ENCODE measurements at regions of chr15 and their contacts with region 1.

Region 1: GRCh38 chr15:23877502-23878412 is 190.7 kb upstream of the NDN start:
- DNase-seq: peak; percentile 50
- ATAC-seq: peak; percentile 100
- H3K4me3 ChIP-seq: no peak overlapping the region; a peak in 1 of 6 replicates
- H3K27ac ChIP-seq: no peak overlapping the region
- H3K4me1 ChIP-seq: no peaks in the 10 kb centered on the region
- H3K27me3 ChIP-seq: no peaks in the 10 kb centered on the region; a peak in 1 of 5 replicates
- CTCF ChIP-seq: peak; percentile 95
- EP300 ChIP-seq: no peak
- POLR2A ChIP-seq: no peak
- RAD21 ChIP-seq: peak; percentile 82

Region 2: GRCh38 chr15:23497710-23498111 is 380.0 kb before region 1 on chr15:
- CTCF ChIA-PET with region 1: no interaction called
- POLR2A ChIA-PET with region 1: no interaction called
- in situ Hi-C with region 1: no loop called
- intact Hi-C with region 1: loop called (anchors 1 kb)
- DNase-seq: no peak
- ATAC-seq: no peak
- H3K4me3 ChIP-seq: no peak overlapping the region
- H3K27ac ChIP-seq: no peak overlapping the region
- H3K4me1 ChIP-seq: no peaks in the 10 kb centered on the region
- H3K27me3 ChIP-seq: no peaks in the 10 kb centered on the region; a peak in 1 of 5 replicates
- CTCF ChIP-seq: 0 out of 2 replicates have a peak, but pooled peaks have one; percentile 21
- EP300 ChIP-seq: no peak
- POLR2A ChIP-seq: no peak
- RAD21 ChIP-seq: no peak

Region 3: DNA sequence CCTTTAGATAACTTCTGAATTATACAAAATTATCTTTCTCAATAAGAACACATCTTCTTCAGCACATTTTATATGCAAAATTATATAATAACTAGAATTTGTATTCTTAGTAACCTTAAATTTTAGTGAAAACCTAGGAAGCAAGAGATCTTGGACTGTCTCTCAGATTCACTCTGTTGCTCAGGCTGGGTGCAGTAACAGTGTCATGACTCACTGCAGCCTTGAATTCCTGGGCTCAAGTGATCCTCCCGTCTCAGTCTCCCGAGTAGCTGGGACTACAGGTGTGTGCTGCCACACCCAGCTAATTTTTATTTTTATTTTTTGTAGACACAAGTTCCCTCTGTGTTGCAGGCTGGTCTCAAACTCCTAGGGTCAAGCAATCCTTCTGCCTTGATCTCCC is 282.4 kb before region 1 on chr15:
- CTCF ChIA-PET with region 1: no interaction called
- POLR2A ChIA-PET with region 1: no interaction called
- in situ Hi-C with region 1: no loop called
- intact Hi-C with region 1: no loop called
- DNase-seq: no peak
- ATAC-seq: no peak
- H3K4me3 ChIP-seq: no peak overlapping the region
- H3K27ac ChIP-seq: no peak overlapping the region
- H3K4me1 ChIP-seq: no peaks in the 10 kb centered on the region
- H3K27me3 ChIP-seq: no peaks in the 10 kb centered on the region
- CTCF ChIP-seq: no peak
- EP300 ChIP-seq: no peak
- POLR2A ChIP-seq: no peak
- RAD21 ChIP-seq: no peak

Region 4: DNA sequence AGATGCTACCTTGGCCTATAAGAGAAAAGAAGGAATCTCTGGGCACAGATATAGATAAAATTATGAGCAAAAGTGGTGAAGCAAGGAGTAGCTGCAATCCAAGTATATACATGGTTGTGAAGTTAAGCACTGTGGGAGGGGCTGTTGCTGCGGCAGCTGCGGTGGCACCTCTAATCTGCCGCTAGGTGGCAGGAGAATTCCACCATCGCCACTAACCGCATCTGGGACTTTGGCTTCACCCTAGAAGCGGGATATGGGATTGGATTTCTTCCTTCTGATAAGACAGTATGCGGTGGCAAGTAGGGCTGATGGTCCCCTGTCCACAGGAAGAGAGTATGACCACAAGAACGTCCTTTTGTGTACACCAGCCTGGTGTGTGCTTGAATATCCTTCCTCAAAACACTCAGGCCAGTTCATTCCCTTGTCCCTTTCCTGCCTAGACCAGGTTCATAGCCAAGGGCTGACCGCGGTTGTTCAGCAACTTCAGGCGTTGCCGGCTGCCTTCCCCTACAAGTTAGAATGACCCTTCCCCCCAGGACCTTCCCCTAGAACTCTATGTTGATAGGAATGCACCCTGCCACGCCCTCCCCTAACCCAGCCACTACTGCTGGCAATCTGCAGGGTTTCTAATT is 235.2 kb before region 1 on chr15:
- CTCF ChIA-PET with region 1: interaction called, 17 read pairs
- POLR2A ChIA-PET with region 1: no interaction called
- in situ Hi-C with region 1: no loop called
- intact Hi-C with region 1: loop called (anchors 1 kb)
- DNase-seq: peak; percentile 51
- ATAC-seq: peak; percentile 93
- H3K4me3 ChIP-seq: no peak overlapping the region
- H3K27ac ChIP-seq: no peak overlapping the region
- H3K4me1 ChIP-seq: no peaks in the 10 kb centered on the region
- H3K27me3 ChIP-seq: peaks cover 2% of the 10 kb centered on the region in 2 experiments; a peak in 2 of 5 replicates
- CTCF ChIP-seq: peak; percentile 92
- EP300 ChIP-seq: no peak
- POLR2A ChIP-seq: no peak
- RAD21 ChIP-seq: peak; percentile 85

Region 5: GRCh38 chr15:23648920-23649515 is 228.7 kb before region 1 on chr15:
- CTCF ChIA-PET with region 1: interaction called, 17 read pairs
- POLR2A ChIA-PET with region 1: no interaction called
- in situ Hi-C with region 1: no loop called
- intact Hi-C with region 1: no loop called
- DNase-seq: peak; percentile 16
- ATAC-seq: peak; percentile 82
- H3K4me3 ChIP-seq: no peak overlapping the region
- H3K27ac ChIP-seq: no peak overlapping the region
- H3K4me1 ChIP-seq: no peaks in the 10 kb centered on the region
- H3K27me3 ChIP-seq: peaks cover 2 to 18% of the 10 kb centered on the region in 2 experiments; a peak in 2 of 5 replicates
- CTCF ChIP-seq: peak; percentile 75
- EP300 ChIP-seq: no peak
- POLR2A ChIP-seq: no peak
- RAD21 ChIP-seq: 0 out of 2 replicates have a peak, but pooled peaks have one; percentile 41

Region 6: DNA sequence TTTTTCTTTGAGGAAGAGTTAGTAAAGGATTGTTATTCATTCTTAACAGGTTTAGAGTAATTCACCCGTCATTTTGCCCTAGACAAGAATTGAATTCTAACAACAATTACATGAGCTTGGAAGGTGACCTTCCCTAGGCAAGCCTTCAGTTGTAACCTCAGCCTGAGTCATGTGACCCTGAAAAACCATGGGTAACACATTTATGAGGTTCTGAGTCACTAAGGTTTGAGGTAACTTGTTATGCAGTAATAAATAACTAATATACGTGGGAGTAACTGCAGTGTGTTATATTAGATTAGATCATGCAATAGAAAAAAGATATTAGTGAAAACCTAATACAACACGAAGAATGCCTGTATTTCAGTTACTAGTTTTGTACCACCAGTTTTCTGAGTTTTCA is 46.9 kb after region 1 on chr15:
- CTCF ChIA-PET with region 1: no interaction called
- POLR2A ChIA-PET with region 1: no interaction called
- in situ Hi-C with region 1: no loop called
- intact Hi-C with region 1: no loop called
- DNase-seq: no peak
- ATAC-seq: no peak
- H3K4me3 ChIP-seq: no peak overlapping the region
- H3K27ac ChIP-seq: no peak overlapping the region
- H3K4me1 ChIP-seq: no peaks in the 10 kb centered on the region
- H3K27me3 ChIP-seq: no peaks in the 10 kb centered on the region
- CTCF ChIP-seq: no peak
- EP300 ChIP-seq: no peak
- POLR2A ChIP-seq: no peak
- RAD21 ChIP-seq: no peak